Gastrocnemius medialis (tissue), 4 donors: ENCODE measurements at regions of chr9 and their contacts with region 1.

Region 1: DNA sequence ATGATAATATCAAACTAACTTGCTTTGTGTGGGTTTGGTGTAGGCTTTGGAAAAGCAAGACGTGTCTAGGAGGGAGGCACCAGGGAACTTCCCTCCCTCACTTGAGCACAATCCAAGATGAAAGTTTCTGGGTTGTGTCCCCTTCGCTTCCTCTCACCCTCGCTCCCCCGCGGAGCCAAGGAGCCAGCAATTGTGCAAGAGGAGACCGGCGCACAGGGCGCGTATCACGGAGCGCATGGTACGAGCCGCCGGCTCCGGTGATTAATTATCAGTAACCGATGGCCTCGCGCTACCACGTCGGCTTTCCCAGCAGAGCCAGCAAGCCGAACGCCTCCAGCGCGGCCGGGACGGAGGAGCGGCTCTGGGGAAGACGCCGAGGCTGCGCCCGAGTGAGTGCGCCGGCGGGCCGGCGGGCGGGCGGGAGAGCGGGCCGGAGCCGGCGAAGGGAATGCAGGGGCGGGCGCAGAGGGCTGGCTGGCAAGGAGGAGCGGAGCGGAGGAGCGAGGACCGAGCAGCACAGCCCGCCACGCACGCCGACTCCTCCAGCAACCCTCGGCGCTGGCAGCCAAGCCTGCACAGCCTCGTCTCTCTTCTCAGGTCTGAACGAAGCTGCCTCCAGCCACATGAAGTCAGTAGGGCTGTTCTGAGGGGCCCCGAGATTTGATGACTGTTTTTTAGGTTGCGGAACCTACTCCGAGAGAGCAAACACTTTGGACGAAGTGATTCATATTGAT is 143.6 kb downstream of the BNC2 start:
- DNase-seq: peak; percentile 54 to 75
- ATAC-seq: peak; percentile 53 to 77
- H3K4me3 ChIP-seq: peak overlapping the region; percentile 61 to 70 (median 67)
- H3K27ac ChIP-seq: peak overlapping the region; percentile 79 to 86 (median 84)
- H3K4me1 ChIP-seq: peaks cover 14 to 15% of the 10 kb centered on the region in 2 donors
- H3K27me3 ChIP-seq: peaks cover 0 to 10% (median 0%) of the 10 kb centered on the region in 3 donors
- CTCF ChIP-seq: no peak
- POLR2A ChIP-seq: peak; percentile 45 to 66

Region 2: GRCh38 chr9:16335788-16336580 is 390.9 kb before region 1 on chr9:
- in situ Hi-C with region 1: loop called in 1 of 4 experiments (anchors 25 kb)
- intact Hi-C with region 1: loop called (anchors 10 kb)
- DNase-seq: peak; percentile 75 to 85
- ATAC-seq: peak; percentile 86 to 91
- H3K4me3 ChIP-seq: no peak overlapping the region
- H3K27ac ChIP-seq: peak overlapping the region; percentile 47 to 68 (median 64)
- H3K4me1 ChIP-seq: peaks cover 5 to 7% of the 10 kb centered on the region in 2 donors
- H3K27me3 ChIP-seq: no peaks in the 10 kb centered on the region
- CTCF ChIP-seq: no peak
- POLR2A ChIP-seq: no peak

Region 3: GRCh38 chr9:16553869-16554540 is 172.9 kb before region 1 on chr9:
- in situ Hi-C with region 1: no loop called
- intact Hi-C with region 1: no loop called
- DNase-seq: no peak
- ATAC-seq: no peak
- H3K4me3 ChIP-seq: no peak overlapping the region
- H3K27ac ChIP-seq: no peak overlapping the region
- H3K4me1 ChIP-seq: no peaks in the 10 kb centered on the region
- H3K27me3 ChIP-seq: no peaks in the 10 kb centered on the region
- CTCF ChIP-seq: no peak
- POLR2A ChIP-seq: no peak

Region 4: DNA sequence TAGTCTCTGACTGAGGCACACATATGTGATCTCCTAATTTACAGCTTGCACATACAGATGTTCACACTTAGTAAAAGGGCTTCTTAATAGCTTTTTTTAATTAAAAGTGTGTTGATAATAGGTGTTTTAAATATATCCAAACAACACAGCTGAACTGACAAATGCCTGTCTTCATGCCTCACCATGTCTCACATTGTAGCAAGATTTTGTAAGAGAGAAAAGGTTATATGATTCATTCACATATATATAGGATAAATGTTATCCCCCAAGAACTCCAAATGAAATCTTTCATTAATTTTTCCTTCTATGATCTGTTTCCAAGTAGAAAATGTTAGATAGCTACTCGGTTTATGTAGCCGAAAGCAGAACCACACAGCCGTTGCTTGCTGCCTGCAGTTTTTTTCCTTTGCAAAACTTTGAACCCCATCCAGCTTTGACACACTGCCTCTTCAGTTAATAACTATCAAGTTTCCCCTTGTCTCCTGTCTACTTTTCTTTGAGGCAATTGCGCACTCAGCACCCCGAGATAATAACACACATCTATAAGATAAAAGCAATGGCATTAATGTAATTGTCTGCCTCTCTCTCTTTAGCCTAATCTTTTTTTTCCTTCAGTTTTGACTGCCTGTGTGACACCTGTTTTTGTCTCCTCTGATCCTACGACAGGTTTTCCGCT is 155.6 kb before region 1 on chr9:
- in situ Hi-C with region 1: no loop called
- intact Hi-C with region 1: loop called (anchors 5 kb)
- DNase-seq: no peak
- ATAC-seq: peak; percentile 53 to 58
- H3K4me3 ChIP-seq: peak overlapping the region; percentile 7 to 37 (median 16)
- H3K27ac ChIP-seq: peak overlapping the region in 1 of 4 donors; percentile 11
- H3K4me1 ChIP-seq: peaks cover 4 to 7% of the 10 kb centered on the region in 2 donors
- H3K27me3 ChIP-seq: no peaks in the 10 kb centered on the region
- CTCF ChIP-seq: no peak
- POLR2A ChIP-seq: no peak

Region 5: GRCh38 chr9:16619402-16619801 is 107.5 kb before region 1 on chr9:
- in situ Hi-C with region 1: no loop called
- intact Hi-C with region 1: no loop called
- DNase-seq: no peak
- ATAC-seq: no peak
- H3K4me3 ChIP-seq: no peak overlapping the region
- H3K27ac ChIP-seq: no peak overlapping the region
- H3K4me1 ChIP-seq: peaks cover 1 to 9% of the 10 kb centered on the region in 2 donors
- H3K27me3 ChIP-seq: no peaks in the 10 kb centered on the region
- CTCF ChIP-seq: no peak
- POLR2A ChIP-seq: no peak

Region 6: DNA sequence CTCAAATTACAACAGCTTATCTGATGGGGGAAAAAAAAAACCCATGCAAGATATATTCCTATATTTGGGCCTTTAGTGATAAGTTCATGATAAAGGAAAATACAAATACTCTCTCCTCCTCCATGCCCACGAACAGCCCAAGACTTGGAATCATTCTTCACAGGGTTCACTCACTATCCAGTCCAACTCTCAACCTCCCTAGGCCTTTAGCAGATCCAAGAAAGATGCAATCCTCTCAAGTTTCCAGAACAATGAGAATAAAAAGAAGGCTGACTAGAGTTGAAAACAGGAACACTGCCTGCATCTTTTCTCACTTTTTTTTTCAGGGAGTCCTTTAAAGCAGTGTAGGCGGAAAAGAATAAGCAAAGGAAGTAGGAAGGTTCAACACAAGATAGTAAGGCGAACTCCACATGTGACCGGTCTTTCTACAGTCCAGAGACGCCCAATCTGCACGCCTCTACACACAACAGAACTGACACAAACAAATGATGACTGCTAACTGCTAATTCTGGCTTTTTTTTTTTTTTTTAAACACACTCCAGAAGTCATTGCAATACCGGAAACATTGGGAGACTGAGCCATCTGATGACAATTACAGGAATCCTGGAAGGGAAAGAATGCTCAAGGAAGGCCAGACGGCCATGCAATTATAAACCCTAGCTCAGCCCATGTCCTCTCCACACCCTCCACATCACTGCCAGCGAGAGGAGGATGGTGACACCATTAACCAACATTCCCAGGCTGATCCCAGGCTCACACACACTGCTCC is 68.2 kb after region 1 on chr9:
- in situ Hi-C with region 1: no loop called
- intact Hi-C with region 1: loop called (anchors 10 kb)
- DNase-seq: peak; percentile 6 to 59
- ATAC-seq: peak; percentile 71 to 72
- H3K4me3 ChIP-seq: no peak overlapping the region
- H3K27ac ChIP-seq: peak overlapping the region in 3 of 4 donors; percentile 21 to 29 (median 29)
- H3K4me1 ChIP-seq: peaks cover 8 to 10% of the 10 kb centered on the region in 2 donors
- H3K27me3 ChIP-seq: no peaks in the 10 kb centered on the region
- CTCF ChIP-seq: no peak
- POLR2A ChIP-seq: no peak

Region 7: GRCh38 chr9:16828340-16829281 is 101.7 kb after region 1 on chr9:
- in situ Hi-C with region 1: no loop called
- intact Hi-C with region 1: no loop called
- DNase-seq: peak; percentile 4 to 28
- ATAC-seq: peak; percentile 19 to 64
- H3K4me3 ChIP-seq: peak overlapping the region; percentile 45 to 58 (median 48)
- H3K27ac ChIP-seq: peak overlapping the region; percentile 59 to 75 (median 70)
- H3K4me1 ChIP-seq: peaks cover 13 to 17% of the 10 kb centered on the region in 2 donors
- H3K27me3 ChIP-seq: no peaks in the 10 kb centered on the region
- CTCF ChIP-seq: no peak
- POLR2A ChIP-seq: no peak

Region 8: DNA sequence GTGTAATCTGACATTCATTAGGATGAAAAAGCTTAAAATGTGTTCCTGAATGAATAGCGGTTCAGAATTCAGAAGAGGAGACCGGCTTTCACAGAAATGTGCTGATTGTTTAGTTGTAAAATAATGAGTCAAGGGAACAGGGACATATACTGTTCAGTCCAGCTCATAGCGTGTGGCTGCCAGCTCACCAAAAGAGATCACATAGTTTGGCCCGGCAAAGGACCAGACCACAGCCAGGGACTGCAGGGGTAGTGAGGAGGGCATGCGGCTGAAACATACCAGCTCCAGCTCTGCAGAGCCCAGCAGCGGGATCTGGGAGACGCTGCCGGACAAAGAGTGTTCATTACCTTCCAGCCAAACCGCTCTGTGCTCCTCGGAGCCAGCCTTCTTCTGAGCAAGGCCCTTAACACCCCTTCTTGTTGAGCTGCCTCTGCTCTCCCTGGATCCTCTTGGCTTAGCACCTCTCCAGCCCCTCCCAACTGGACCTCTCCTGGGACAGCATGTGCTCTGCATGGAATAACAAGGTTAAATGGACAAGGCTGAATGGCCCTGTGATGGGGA is 291.1 kb after region 1 on chr9:
- in situ Hi-C with region 1: no loop called
- intact Hi-C with region 1: loop called (anchors 5 kb)
- DNase-seq: peak; percentile 68 to 93
- ATAC-seq: peak; percentile 97
- H3K4me3 ChIP-seq: peak overlapping the region in 3 of 4 donors; percentile 9 to 25 (median 16)
- H3K27ac ChIP-seq: peak overlapping the region; percentile 79 to 86 (median 82)
- H3K4me1 ChIP-seq: peaks cover 7 to 16% of the 10 kb centered on the region in 2 donors
- H3K27me3 ChIP-seq: no peaks in the 10 kb centered on the region
- CTCF ChIP-seq: no peak
- POLR2A ChIP-seq: peak; percentile 21 to 27